ENCODE measurements at regions of chr11 and their contacts with region 1.

Region 1: GRCh38 chr11:62108017-62108750 is 15.6 kb upstream of the INCENP start:
- DNase-seq: peak in 7 of 9 experiments; percentile 8 to 80 (median 45)
- ATAC-seq: peak; percentile 65
- H3K4me3 ChIP-seq: no peak overlapping the region
- H3K4me3 Mint-ChIP-seq: no peak overlapping the region
- H3K27ac ChIP-seq: no peak overlapping the region
- H3K27ac Mint-ChIP-seq: no peak overlapping the region
- H3K4me1 ChIP-seq: peaks cover 19% of the 10 kb centered on the region
- H3K4me1 Mint-ChIP-seq: peaks cover 19% of the 10 kb centered on the region
- H3K27me3 ChIP-seq: no peaks in the 10 kb centered on the region
- H3K27me3 Mint-ChIP-seq: no peaks in the 10 kb centered on the region
- CTCF ChIP-seq: peak; percentile 70

Region 2: DNA sequence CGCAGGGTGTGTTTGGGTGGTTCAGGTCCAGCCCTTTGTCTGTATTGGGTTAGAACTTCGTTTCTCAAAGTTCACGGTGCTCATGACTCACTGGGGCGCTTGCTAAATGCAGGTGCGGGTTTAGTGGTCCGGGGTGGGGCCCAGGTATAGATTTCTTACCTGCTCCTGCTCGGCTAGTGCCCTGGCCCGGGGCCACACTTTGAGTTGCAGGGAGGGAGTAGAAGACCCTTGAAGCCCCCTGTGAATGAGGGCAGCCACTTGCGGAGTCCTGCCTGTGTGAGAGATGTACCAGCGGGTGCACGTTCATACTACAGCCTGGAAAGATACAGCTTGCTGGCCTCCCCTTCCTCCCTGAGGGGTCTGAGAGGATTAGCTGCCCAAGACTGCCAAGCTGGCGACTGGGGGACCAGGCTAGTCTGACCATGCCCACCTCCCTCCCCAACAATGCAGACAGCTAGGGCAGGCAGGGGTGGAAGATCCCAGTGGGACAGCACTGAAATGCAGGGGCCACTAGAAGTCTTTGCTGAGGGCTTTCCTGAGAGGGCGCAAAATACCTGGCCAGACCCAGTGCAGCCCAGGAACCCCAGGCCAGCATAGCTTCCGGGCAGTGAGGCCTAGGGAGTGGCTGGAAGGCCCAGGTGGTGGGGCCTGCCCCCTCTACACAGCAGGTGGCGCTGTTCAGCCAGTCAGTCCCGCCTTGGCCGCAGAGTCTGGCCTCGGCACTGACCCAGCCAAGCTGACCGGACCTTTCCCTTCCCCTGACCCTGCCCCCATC is 360.8 kb before region 1 on chr11:
- CTCF ChIA-PET with region 1: interaction called, 13 read pairs
- POLR2A ChIA-PET with region 1: no interaction called
- intact Hi-C with region 1: loop called (anchors 2 kb)
- DNase-seq: peak in 6 of 9 experiments; percentile 22 to 56 (median 45)
- ATAC-seq: peak; percentile 34
- H3K4me3 ChIP-seq: no peak overlapping the region
- H3K4me3 Mint-ChIP-seq: no peak overlapping the region
- H3K27ac ChIP-seq: no peak overlapping the region
- H3K27ac Mint-ChIP-seq: no peak overlapping the region
- H3K4me1 ChIP-seq: peaks cover 6% of the 10 kb centered on the region
- H3K4me1 Mint-ChIP-seq: peaks cover 5% of the 10 kb centered on the region
- H3K27me3 ChIP-seq: peaks cover 3% of the 10 kb centered on the region in 2 experiments
- H3K27me3 Mint-ChIP-seq: peaks cover 21% of the 10 kb centered on the region
- CTCF ChIP-seq: peak; percentile 62

Region 3: GRCh38 chr11:61871158-61871597 is 237.0 kb before region 1 on chr11:
- CTCF ChIA-PET with region 1: interaction called, 13 read pairs
- POLR2A ChIA-PET with region 1: no interaction called
- intact Hi-C with region 1: loop called (anchors 1 kb)
- DNase-seq: peak; percentile 30 to 74 (median 64)
- ATAC-seq: peak; percentile 94
- H3K4me3 ChIP-seq: no peak overlapping the region
- H3K4me3 Mint-ChIP-seq: peak overlapping the region; percentile 64
- H3K27ac ChIP-seq: no peak overlapping the region
- H3K27ac Mint-ChIP-seq: no peak overlapping the region
- H3K4me1 ChIP-seq: no peaks in the 10 kb centered on the region
- H3K4me1 Mint-ChIP-seq: peaks cover 3% of the 10 kb centered on the region
- H3K27me3 ChIP-seq: no peaks in the 10 kb centered on the region
- H3K27me3 Mint-ChIP-seq: no peaks in the 10 kb centered on the region
- CTCF ChIP-seq: peak; percentile 89

Region 4: DNA sequence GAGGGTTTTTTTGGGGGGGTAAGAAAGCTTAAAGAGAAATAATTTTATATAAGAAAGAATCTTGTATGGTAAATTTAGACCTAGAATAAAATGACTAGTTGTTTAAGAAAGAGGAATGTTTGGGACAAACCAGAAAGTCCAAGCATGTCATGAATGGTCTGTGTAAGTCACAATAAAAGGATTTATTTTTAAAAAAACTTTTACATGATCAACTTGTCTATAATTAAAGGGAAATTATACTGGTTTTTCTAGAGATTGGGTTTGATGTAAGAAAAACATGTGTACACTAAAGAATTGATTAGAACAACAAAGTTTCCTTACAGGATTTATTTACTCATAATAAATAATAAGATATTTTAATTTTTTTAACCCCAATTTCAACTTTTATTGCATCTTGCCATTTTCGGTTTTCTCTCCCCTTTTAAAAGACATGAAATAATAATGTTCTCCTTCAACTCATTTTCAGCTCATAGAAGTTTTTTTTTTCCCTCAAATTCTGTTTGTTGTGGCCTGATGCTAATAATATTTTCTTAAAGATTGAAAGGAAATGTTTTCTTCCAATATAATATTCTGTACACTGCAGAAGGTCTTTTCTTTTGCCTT is 19.8 kb before region 1 on chr11:
- CTCF ChIA-PET with region 1: interaction called, 12 read pairs
- POLR2A ChIA-PET with region 1: no interaction called
- intact Hi-C with region 1: no loop called
- DNase-seq: no peak
- ATAC-seq: no peak
- H3K4me3 ChIP-seq: no peak overlapping the region
- H3K4me3 Mint-ChIP-seq: no peak overlapping the region
- H3K27ac ChIP-seq: no peak overlapping the region
- H3K27ac Mint-ChIP-seq: no peak overlapping the region
- H3K4me1 ChIP-seq: no peaks in the 10 kb centered on the region
- H3K4me1 Mint-ChIP-seq: no peaks in the 10 kb centered on the region
- H3K27me3 ChIP-seq: no peaks in the 10 kb centered on the region
- H3K27me3 Mint-ChIP-seq: peaks cover 7% of the 10 kb centered on the region
- CTCF ChIP-seq: no peak

Region 5: GRCh38 chr11:62390722-62391121 is 282.5 kb after region 1 on chr11:
- CTCF ChIA-PET with region 1: no interaction called
- POLR2A ChIA-PET with region 1: no interaction called
- intact Hi-C with region 1: no loop called
- DNase-seq: no peak
- ATAC-seq: no peak
- H3K4me3 ChIP-seq: no peak overlapping the region
- H3K4me3 Mint-ChIP-seq: no peak overlapping the region
- H3K27ac ChIP-seq: no peak overlapping the region
- H3K27ac Mint-ChIP-seq: no peak overlapping the region
- H3K4me1 ChIP-seq: peaks cover 6% of the 10 kb centered on the region
- H3K4me1 Mint-ChIP-seq: peaks cover 19% of the 10 kb centered on the region
- H3K27me3 ChIP-seq: no peaks in the 10 kb centered on the region
- H3K27me3 Mint-ChIP-seq: no peaks in the 10 kb centered on the region
- CTCF ChIP-seq: no peak

Measured in CD8-positive, alpha-beta T cell (primary cell).